PC-9 (cell line): ENCODE measurements at regions of chr9 and their contacts with region 1.

Region 1: DNA sequence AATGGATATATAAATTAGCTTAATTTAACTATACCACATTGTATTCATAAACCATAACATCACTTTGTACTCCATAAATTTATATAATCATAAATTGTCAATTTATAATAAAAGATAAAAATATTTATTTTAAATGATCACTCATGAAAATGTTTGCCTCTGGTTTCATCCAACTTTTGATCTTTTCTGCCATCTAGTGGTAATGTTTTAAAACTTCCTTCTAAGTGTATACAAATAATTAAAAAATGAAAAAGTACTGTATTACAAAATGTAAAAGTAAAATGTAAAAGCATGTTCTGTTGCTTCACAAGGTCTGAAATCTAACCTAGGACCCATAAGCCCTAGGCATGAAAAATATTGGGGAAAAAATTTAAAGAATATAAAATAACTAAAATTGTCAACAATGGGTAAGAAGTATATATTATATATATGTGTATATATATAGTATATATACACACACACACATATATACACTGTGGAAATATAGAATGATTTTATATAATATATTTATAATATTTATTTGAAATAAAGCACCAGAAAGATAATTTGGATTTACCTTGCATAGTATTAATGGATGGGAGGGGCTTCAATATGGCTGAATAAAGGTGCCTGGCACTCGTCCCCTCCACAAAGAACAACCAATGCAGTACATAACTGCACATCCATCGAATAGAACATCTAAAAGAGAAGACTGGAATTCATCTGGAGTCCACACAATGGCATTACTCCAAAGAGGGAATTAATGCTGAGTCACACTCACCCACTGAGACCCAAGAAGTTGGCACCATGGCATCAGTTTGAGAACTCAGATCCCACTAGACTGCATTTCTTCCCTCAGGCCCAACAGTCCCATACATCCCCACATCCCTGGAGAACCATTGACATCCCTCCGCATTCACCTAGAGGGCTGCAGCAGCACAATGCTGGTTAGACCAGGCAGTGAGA is 32.5 kb downstream of the ANXA1 start:
- DNase-seq: peak in 1 of 2 experiments; percentile 52
- H3K4me3 ChIP-seq: no peak overlapping the region
- H3K27ac ChIP-seq: no peak overlapping the region
- H3K4me1 ChIP-seq: peaks cover 23% of the 10 kb centered on the region
- H3K27me3 ChIP-seq: no peaks in the 10 kb centered on the region
- CTCF ChIP-seq: peak; percentile 80

Region 2: GRCh38 chr9:72280913-72281500 is 903.2 kb before region 1 on chr9:
- CTCF ChIA-PET with region 1: no interaction called
- POLR2A ChIA-PET with region 1: interaction called, 4 read pairs
- intact Hi-C with region 1: loop called (anchors 5 kb)
- DNase-seq: peak; percentile 46 to 72
- H3K4me3 ChIP-seq: no peak overlapping the region
- H3K27ac ChIP-seq: no peak overlapping the region
- H3K4me1 ChIP-seq: no peaks in the 10 kb centered on the region
- H3K27me3 ChIP-seq: no peaks in the 10 kb centered on the region
- CTCF ChIP-seq: peak; percentile 96

Region 3: GRCh38 chr9:72827950-72828731 is 356.0 kb before region 1 on chr9:
- CTCF ChIA-PET with region 1: no interaction called
- POLR2A ChIA-PET with region 1: no interaction called
- intact Hi-C with region 1: loop called (anchors 1 kb)
- DNase-seq: peak; percentile 16 to 97
- H3K4me3 ChIP-seq: no peak overlapping the region
- H3K27ac ChIP-seq: peak overlapping the region; percentile 92
- H3K4me1 ChIP-seq: peaks cover 31% of the 10 kb centered on the region
- H3K27me3 ChIP-seq: no peaks in the 10 kb centered on the region
- CTCF ChIP-seq: no peak

Region 4: GRCh38 chr9:72978744-72979143 is 205.4 kb before region 1 on chr9:
- CTCF ChIA-PET with region 1: no interaction called
- POLR2A ChIA-PET with region 1: no interaction called
- intact Hi-C with region 1: loop called (anchors 5 kb)
- DNase-seq: peak in 1 of 2 experiments; percentile 66
- H3K4me3 ChIP-seq: no peak overlapping the region
- H3K27ac ChIP-seq: peak overlapping the region; percentile 24; the same call in 1 of the 2 replicates
- H3K4me1 ChIP-seq: peaks cover 9% of the 10 kb centered on the region
- H3K27me3 ChIP-seq: no peaks in the 10 kb centered on the region
- CTCF ChIP-seq: no peak

Region 5: GRCh38 chr9:73081979-73082657 is 102.1 kb before region 1 on chr9:
- CTCF ChIA-PET with region 1: interaction called, 3 read pairs
- POLR2A ChIA-PET with region 1: no interaction called
- intact Hi-C with region 1: loop called (anchors 2 kb)
- DNase-seq: no peak
- H3K4me3 ChIP-seq: no peak overlapping the region
- H3K27ac ChIP-seq: no peak overlapping the region
- H3K4me1 ChIP-seq: peaks cover 22% of the 10 kb centered on the region
- H3K27me3 ChIP-seq: no peaks in the 10 kb centered on the region
- CTCF ChIP-seq: peak; percentile 78

Region 6: DNA sequence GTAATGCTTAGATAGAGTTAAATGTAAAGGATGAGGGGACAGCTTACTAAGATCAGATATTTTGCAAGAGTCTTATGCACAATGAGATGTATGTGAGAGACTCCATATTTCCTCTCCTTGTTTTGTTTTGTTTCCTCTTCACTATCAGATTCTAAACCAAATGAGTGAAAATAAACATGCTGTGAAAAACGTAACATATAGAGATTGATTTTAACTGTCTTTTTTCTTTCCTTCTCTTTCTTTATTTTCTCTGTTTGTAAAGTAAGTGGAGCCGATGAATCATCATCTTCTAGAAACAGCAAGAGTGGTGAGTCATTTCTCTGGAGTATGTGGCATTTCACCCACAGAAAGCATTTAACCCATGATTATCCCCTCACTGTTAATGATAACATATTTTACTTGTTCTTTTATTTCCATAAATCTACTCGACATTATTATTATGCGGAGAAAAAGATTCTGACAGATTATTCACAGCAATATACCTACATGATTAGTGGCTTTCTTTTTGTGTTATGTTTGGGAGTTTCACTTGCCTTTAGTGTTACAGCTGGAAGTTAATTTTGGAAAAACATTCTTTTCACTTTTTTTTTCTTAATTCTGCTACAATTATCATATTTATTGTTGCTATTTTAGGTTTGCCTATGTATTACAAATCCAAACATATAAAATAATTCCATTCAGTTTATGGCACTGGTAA is 34.7 kb before region 1 on chr9:
- CTCF ChIA-PET with region 1: no interaction called
- POLR2A ChIA-PET with region 1: interaction called, 6 read pairs
- intact Hi-C with region 1: loop called (anchors 1 kb)
- DNase-seq: peak in 1 of 2 experiments; percentile 81
- H3K4me3 ChIP-seq: no peak overlapping the region; the same call in 1 of the 2 replicates
- H3K27ac ChIP-seq: peak overlapping the region; percentile 86
- H3K4me1 ChIP-seq: peaks cover 67% of the 10 kb centered on the region
- H3K27me3 ChIP-seq: no peaks in the 10 kb centered on the region
- CTCF ChIP-seq: no peak